Motor neuron (in vitro differentiated cells): ENCODE measurements at regions of chr5 and their contacts with region 1.

Region 1: GRCh38 chr5:54547711-54548250 is 30.2 kb downstream of the SNX18 start:
- ATAC-seq: peak in 2 of 8 experiments; percentile 54 to 82
- H3K4me3 ChIP-seq: no peak overlapping the region
- H3K27ac ChIP-seq: no peak overlapping the region
- H3K4me1 ChIP-seq: no peaks in the 10 kb centered on the region

Region 2: DNA sequence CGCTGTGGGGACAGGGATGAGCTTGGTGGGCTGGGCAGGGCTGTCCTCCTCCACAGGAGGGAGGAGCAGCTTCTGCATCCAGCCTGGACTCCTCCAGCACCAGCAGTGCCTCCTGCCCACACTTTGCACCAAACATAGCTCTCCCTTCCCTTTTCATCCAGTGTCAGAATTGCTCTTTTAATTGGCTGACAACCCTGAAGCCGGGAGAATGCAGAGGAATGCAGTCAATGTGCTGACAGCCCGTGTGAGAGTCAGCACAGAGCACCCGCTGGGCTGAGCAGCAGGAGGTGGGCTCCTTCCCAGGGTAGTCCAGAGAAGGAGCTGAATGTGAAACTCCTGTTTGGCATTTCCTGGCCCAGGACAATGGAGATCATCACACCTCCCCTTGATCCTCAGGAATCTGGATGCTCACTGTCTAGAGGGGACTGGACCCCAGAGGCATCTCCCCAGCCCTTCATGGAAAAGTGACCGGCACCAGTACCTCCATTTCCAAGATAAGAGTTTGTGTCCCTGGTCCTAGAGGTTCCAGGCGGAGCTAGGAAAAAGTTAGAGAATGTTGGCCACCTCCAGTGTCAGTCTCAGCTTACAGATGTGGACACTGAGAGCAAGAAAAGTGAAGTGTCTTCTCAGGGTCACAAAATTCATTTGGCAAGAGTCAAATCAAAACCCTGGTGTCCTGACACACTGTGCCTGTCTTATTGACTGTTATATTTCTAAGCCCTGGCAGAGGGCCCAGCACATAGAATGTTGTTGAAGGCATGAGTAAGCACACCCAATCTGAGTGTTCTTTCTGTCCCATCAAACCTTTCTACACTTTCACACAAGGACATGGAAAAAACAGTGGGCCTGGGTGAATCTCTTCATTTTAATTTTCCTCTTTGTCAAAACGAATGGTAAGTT is 171.9 kb after region 1 on chr5:
- in situ Hi-C with region 1: loop called in 1 of 9 experiments (anchors 10 kb)
- ATAC-seq: peak; percentile 41 to 91 (median 74)
- H3K4me3 ChIP-seq: no peak overlapping the region
- H3K27ac ChIP-seq: no peak overlapping the region
- H3K4me1 ChIP-seq: peaks cover 0 to 7% of the 10 kb centered on the region in 2 donors

Region 3: GRCh38 chr5:54844905-54845566 is 297.3 kb after region 1 on chr5:
- in situ Hi-C with region 1: loop called in 2 of 9 experiments (anchors 25 kb)
- ATAC-seq: peak in 5 of 8 experiments; percentile 27 to 77 (median 67)
- H3K4me3 ChIP-seq: no peak overlapping the region
- H3K27ac ChIP-seq: no peak overlapping the region
- H3K4me1 ChIP-seq: peaks cover 3 to 10% of the 10 kb centered on the region in 2 donors

Region 4: DNA sequence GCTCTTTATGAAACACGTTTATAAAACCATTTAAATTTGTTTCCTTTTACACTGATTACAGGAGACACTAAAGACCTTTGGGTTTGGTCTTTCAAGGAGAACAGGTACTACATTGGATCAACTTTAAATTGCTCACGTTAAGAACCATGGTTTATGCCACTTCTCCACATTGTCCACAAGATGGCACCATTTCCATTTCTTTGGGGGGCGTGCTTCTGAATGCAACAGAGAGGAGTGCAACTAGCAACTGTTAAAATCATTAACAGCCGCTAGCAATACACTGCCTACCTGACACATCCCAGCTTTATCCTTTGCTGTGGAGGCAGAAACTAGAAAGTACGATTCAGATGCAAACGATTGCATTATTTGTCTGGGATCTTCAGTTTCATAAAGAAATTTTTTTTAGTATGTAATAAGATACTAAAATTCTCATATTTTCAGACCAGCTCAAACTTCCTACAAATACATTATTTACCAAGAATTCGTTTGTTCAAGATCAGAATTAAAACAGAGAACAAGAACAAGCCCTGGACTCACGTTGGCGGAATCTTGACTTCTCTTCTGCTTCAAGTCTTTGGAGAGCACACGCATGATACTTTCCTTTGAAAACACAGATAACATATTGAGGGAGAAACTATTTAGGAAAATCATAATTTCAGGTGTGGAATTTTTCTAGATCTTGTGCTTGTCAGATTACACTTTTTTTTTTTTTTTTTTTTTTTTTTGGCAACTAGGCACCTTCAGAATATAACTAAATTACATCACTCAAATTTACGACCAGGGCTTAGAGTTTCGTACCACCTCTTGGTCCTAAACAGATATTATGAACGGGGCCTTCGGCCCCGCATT is 624.5 kb after region 1 on chr5:
- in situ Hi-C with region 1: loop called in 1 of 9 experiments (anchors 25 kb)
- ATAC-seq: peak; percentile 15 to 42 (median 20)
- H3K4me3 ChIP-seq: peak overlapping the region; percentile 35 to 52 (median 47)
- H3K27ac ChIP-seq: no peak overlapping the region
- H3K4me1 ChIP-seq: peaks cover 3 to 9% of the 10 kb centered on the region in 2 donors